ENCODE measurements at regions of chr14 and their contacts with region 1.

Region 1: DNA sequence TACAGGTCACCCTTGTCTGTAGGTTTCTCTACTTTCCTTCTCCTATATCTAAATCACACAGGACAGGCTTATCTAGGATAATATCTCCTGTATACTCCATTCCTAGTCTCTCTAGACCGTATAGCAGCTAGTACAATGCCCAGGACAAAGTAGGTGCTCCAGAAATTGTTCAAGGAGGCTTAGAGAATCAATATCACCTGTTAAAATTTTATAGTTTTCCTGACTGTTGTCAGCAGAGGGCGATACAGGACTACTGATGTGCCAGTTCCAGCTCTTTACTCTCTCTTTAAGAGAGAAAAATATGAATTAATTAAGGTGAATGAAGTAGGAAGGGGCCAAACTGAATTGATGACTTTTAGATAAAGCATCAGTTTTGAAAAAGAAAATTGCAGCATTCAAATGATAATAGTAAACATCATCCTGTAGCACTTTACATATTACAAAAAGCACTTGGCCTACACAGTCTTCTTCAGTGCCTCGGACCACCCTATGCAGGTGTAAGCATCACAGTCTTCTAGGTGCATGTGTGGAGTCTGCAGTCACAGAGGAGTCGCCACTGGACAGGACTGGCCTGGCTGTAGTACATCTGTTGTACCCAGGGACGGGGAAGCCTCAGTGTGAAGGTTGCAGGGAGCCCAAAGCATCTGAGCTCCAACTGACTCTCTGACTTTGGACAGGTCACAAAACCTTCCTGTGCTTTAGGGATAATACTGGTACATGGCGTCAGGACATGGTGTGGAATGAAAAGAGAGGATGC is 61.9 kb upstream of the MAX start:
- DNase-seq: peak in 19 of 42 donors; percentile 19 to 81 (median 49)

Region 2: DNA sequence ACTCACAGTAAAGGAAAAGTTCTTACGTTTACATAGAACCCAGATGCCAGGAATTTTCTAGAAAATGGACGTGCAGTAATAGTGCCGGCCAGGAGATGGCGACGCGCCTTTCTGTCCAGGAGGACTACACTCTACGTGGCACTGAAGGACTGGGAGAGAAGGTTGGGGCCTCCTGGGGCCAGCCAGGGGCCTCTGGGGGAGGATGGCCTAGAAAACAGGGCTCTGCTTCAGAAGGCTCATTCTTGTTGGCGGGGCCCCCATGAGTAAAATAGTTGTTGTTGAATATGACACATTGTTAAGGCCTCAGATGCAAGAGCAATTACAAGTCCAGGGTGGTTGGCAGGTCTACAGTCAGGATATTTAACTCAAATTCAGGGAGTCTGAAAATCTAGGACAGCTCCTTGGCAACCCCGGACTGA is 58.2 kb after region 1 on chr14:
- intact Hi-C with region 1: loop called (anchors 10 kb)
- DNase-seq: peak in 41 of 42 donors; percentile 41 to 87 (median 71)

Region 3: GRCh38 chr14:65281991-65282895 is 118.0 kb after region 1 on chr14:
- intact Hi-C with region 1: loop called (anchors 10 kb)
- DNase-seq: peak; percentile 60 to 95 (median 86)

Region 4: GRCh38 chr14:65373679-65374039 is 209.4 kb after region 1 on chr14:
- intact Hi-C with region 1: loop called (anchors 10 kb)
- DNase-seq: peak in 40 of 42 donors; percentile 31 to 90 (median 66)

Region 5: GRCh38 chr14:65832431-65833266 is 668.4 kb after region 1 on chr14:
- intact Hi-C with region 1: loop called (anchors 5 kb)
- DNase-seq: no peak

Region 6: DNA sequence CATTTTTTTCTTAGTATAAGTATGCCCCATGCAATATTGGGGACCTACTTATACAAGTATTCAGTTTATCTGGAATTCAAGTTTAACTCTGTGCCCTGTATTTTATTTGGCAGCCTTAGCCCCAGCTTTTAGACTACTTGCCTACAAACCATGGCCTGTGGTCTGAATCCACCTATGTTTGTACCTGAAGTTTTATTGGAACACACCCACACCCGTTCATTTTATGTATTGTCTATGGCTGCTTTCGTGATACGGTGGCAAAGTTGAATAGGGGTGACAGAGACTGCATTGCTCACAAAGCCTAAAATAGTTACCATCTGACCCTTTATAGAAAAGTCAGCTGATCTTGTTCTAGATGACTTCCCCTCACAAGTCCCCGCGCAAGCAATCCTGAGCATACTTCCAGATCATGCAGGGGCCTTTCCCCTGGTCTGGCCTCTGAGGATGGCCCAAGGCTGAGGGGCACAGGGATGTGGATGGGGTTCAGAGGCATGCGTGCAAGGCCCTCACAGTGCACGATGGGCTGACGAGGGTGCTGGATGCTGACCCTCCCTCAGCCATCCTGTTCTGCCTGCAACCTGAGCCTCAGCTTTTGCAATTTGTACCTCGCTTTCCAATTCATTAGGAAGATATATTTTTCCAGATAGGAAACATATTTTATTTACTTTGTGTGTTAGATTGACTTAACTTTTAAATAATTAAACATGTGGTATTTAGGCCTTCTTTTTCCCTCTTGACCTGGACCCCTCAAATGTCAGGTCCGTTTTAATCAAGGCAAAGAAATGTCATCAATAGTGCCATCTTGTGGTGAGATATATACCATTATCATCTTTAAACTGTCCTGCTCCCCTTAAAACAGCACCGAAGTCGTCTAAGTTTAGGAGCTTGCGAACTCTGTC is 794.7 kb after region 1 on chr14:
- intact Hi-C with region 1: loop called (anchors 2 kb)
- DNase-seq: peak in 2 of 42 donors; percentile 19 to 27

Measured in head of caudate nucleus (tissue), 42 donors.